Psoas muscle (tissue), 8 donors: ENCODE measurements at regions of chr11 and their contacts with region 1.

Region 1: DNA sequence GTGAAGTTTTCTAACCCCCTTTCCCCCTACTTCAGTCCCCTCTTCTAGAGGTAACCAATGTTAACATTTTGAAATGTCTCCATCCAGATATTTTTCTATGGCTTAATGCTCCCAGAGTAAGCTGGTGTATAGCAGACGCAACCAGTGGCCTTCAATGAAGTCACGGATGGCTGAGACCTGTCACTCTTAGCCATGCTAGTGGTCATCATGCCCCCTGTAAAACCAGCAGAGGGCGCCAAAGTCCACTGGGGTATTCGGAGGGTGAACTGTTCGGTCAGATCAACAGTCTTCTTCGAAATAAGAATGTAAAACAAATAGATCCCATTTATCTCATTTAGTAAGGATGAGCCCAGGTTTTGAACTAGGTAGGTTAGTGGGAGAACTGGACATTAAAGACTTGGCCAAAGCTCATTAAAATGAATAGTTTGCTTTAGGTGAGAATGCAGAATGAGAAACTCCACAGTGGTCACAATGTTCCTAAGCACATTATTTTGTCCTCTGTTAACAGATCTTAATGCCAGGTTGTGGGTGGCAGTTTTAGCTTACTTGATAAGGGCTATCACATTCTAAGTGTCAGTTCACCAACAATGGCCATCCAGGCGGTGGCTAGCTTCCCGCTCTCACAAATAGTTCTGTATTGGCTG is 8.6 kb upstream of the MMP8 start:
- DNase-seq: peak in 1 of 2 donors; percentile 15
- ATAC-seq: no peak
- H3K4me3 ChIP-seq: no peak overlapping the region
- H3K27ac ChIP-seq: no peak overlapping the region
- H3K4me1 ChIP-seq: no peaks in the 10 kb centered on the region
- H3K27me3 ChIP-seq: no peaks in the 10 kb centered on the region
- CTCF ChIP-seq: peak; percentile 49

Region 2: GRCh38 chr11:102940714-102941588 is 207.6 kb after region 1 on chr11:
- intact Hi-C with region 1: loop called in 1 of 2 experiments (anchors 10 kb)
- DNase-seq: no peak
- ATAC-seq: peak in 1 of 4 donors; percentile 51
- H3K4me3 ChIP-seq: no peak overlapping the region
- H3K27ac ChIP-seq: no peak overlapping the region
- H3K4me1 ChIP-seq: no peaks in the 10 kb centered on the region
- H3K27me3 ChIP-seq: no peaks in the 10 kb centered on the region
- CTCF ChIP-seq: peak; percentile 57